Activated CD4-positive, alpha-beta T cell treated with anti-CD3 and anti-CD28 coated beads, Interleukin-2, amount 10 ng/mL, durations not matched to agents 24 days and 14 days (primary cell): ENCODE measurements at regions of chr9 and their contacts with region 1.

Region 1: DNA sequence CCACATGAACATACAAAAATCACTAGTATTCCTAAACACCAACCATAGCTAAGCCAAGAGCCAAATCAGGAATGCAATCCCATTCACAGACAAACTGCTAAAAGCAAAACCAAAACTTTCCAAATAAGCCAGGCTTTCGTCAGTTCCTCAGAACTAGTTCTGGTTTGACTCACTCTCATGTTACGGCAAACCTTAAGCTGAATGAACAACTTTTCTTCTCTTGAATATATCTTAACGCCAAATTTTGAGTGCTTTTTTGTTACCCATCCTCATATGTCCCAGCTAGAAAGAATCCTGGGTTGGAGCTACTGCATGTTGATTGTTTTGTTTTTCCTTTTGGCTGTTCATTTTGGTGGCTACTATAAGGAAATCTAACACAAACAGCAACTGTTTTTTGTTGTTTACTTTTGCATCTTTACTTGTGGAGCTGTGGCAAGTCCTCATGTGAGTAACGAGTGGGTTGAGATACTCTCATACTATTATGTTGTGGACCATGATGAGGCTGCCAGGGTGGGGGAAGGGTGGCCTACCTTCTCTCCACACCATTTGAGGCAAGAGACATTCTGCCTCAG is at the start of gene PDCD1LG2:
- DNase-seq: peak; percentile 83
- H3K4me3 Mint-ChIP-seq: peak within 1 kb of the TSS; percentile 85
- H3K27ac Mint-ChIP-seq: peak within 1 kb of the TSS; percentile 96
- H3K4me1 Mint-ChIP-seq: peaks cover 53% of the 10 kb centered on the region
- H3K27me3 Mint-ChIP-seq: peaks cover 2% of the 10 kb centered on the region
- total RNA-seq, gene PDCD1LG2: 1.3 and 1.5 TPM in 2 replicates

Region 2: GRCh38 chr9:5301544-5301943 is 208.9 kb before region 1 on chr9:
- intact Hi-C with region 1: no loop called
- DNase-seq: no peak
- H3K4me3 Mint-ChIP-seq: peak overlapping the region; percentile 11
- H3K27ac Mint-ChIP-seq: peak overlapping the region; percentile 37
- H3K4me1 Mint-ChIP-seq: peaks cover 11% of the 10 kb centered on the region
- H3K27me3 Mint-ChIP-seq: no peaks in the 10 kb centered on the region

Region 3: DNA sequence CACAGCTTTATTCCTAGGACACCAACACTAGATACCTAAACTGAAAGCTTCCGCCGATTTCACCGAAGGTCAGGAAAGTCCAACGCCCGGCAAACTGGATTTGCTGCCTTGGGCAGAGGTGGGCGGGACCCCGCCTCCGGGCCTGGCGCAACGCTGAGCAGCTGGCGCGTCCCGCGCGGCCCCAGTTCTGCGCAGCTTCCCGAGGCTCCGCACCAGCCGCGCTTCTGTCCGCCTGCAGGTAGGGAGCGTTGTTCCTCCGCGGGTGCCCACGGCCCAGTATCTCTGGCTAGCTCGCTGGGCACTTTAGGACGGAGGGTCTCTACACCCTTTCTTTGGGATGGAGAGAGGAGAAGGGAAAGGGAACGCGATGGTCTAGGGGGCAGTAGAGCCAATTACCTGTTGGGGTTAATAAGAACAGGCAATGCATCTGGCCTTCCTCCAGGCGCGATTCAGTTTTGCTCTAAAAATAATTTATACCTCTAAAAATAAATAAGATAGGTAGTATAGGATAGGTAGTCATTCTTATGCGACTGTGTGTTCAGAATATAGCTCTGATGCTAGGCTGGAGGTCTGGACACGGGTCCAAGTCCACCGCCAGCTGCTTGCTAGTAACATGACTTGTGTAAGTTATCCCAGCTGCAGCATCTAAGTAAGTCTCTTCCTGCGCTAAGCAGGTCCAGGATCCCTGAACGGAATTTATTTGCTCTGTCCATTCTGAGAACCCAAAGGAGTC is 59.9 kb before region 1 on chr9 and contains the start of gene CD274:
- intact Hi-C with region 1: loop called (anchors 1 kb)
- DNase-seq: peak; percentile 95
- H3K4me3 Mint-ChIP-seq: peak within 1 kb of the TSS; percentile 90
- H3K27ac Mint-ChIP-seq: peak within 1 kb of the TSS; percentile 90
- H3K4me1 Mint-ChIP-seq: peaks cover 56% of the 10 kb centered on the region
- H3K27me3 Mint-ChIP-seq: no peaks in the 10 kb centered on the region
- total RNA-seq, gene CD274: 52.1 and 57.6 TPM in 2 replicates

Region 4: GRCh38 chr9:5493679-5494511 is 16.6 kb before region 1 on chr9:
- intact Hi-C with region 1: loop called (anchors 1 kb)
- DNase-seq: peak; percentile 70
- H3K4me3 Mint-ChIP-seq: peak overlapping the region; percentile 40
- H3K27ac Mint-ChIP-seq: peak overlapping the region; percentile 73
- H3K4me1 Mint-ChIP-seq: peaks cover 15% of the 10 kb centered on the region
- H3K27me3 Mint-ChIP-seq: no peaks in the 10 kb centered on the region

Region 5: GRCh38 chr9:5531101-5531882 is 20.8 kb after region 1 on chr9:
- intact Hi-C with region 1: loop called (anchors 1 kb)
- DNase-seq: peak; percentile 64
- H3K4me3 Mint-ChIP-seq: peak overlapping the region; percentile 52
- H3K27ac Mint-ChIP-seq: peak overlapping the region; percentile 64
- H3K4me1 Mint-ChIP-seq: peaks cover 33% of the 10 kb centered on the region
- H3K27me3 Mint-ChIP-seq: no peaks in the 10 kb centered on the region

Region 6: GRCh38 chr9:5554254-5554653 is 43.8 kb after region 1 on chr9:
- intact Hi-C with region 1: no loop called
- DNase-seq: no peak
- H3K4me3 Mint-ChIP-seq: no peak overlapping the region
- H3K27ac Mint-ChIP-seq: peak overlapping the region; percentile 17
- H3K4me1 Mint-ChIP-seq: peaks cover 32% of the 10 kb centered on the region
- H3K27me3 Mint-ChIP-seq: no peaks in the 10 kb centered on the region

Region 7: GRCh38 chr9:5575000-5575399 is 64.6 kb after region 1 on chr9:
- intact Hi-C with region 1: loop called (anchors 1 kb)
- DNase-seq: no peak
- H3K4me3 Mint-ChIP-seq: no peak overlapping the region
- H3K27ac Mint-ChIP-seq: no peak overlapping the region
- H3K4me1 Mint-ChIP-seq: peaks cover 20% of the 10 kb centered on the region
- H3K27me3 Mint-ChIP-seq: no peaks in the 10 kb centered on the region

Region 8: GRCh38 chr9:5582835-5583195 is 72.4 kb after region 1 on chr9:
- intact Hi-C with region 1: loop called (anchors 1 kb)
- DNase-seq: peak; percentile 88
- H3K4me3 Mint-ChIP-seq: peak overlapping the region; percentile 40
- H3K27ac Mint-ChIP-seq: peak overlapping the region; percentile 92
- H3K4me1 Mint-ChIP-seq: peaks cover 69% of the 10 kb centered on the region
- H3K27me3 Mint-ChIP-seq: no peaks in the 10 kb centered on the region